Naive thymus-derived CD4-positive, alpha-beta T cell (primary cell): ENCODE measurements at regions of chr1 and their contacts with region 1.

Region 1: DNA sequence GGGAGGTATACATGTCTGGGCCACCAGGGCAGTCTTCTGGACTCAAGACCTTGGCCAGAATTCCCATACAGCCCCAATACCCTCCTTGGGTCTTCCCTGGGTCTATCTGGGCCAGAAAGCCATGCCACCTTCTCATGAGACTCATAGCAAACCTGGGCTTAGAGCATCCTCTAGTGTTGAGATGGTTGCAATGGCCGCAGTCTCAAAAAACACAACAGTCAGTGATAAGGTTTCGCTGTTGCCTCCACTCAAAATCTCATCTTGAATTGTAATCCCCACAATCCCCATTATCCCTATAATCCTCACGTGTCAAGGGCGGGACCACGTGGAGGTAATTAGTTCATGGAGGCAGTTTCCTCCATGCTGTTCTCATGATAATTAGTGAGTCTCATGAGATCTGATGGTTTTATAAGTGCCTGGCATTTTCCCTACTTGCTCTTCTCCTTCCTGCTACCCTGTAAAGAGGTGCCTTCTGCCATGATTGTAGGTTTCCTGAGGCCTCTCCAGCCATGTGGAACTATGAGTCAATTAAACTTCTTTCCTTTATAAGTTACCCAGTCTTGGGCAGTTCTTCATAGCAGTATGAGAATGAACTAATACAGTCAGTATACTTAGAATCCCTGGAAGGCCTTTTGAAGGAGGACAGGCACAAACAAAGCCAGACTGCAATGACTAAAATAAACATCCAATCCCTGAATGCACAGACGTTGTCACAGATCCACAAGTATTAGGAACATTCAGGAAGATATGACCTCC is 77.0 kb downstream of the CTH start:
- DNase-seq: peak in 5 of 9 donors; percentile 2 to 20 (median 7)
- ATAC-seq: peak; percentile 42
- H3K4me3 ChIP-seq: no peak overlapping the region
- H3K4me3 Mint-ChIP-seq: no peak overlapping the region
- H3K27ac ChIP-seq: no peak overlapping the region
- H3K27ac Mint-ChIP-seq: no peak overlapping the region
- H3K4me1 ChIP-seq: no peaks in the 10 kb centered on the region
- H3K4me1 Mint-ChIP-seq: peaks cover 0 to 3% (median 0%) of the 10 kb centered on the region in 7 donors
- H3K27me3 ChIP-seq: no peaks in the 10 kb centered on the region
- H3K27me3 Mint-ChIP-seq: peaks cover 0 to 16% (median 6%) of the 10 kb centered on the region in 5 donors

Region 2: GRCh38 chr1:70134148-70134547 is 353.9 kb before region 1 on chr1:
- CTCF ChIA-PET with region 1: no interaction called
- POLR2A ChIA-PET with region 1: no interaction called
- intact Hi-C with region 1: loop called (anchors 1 kb)
- DNase-seq: no peak
- ATAC-seq: no peak
- H3K4me3 ChIP-seq: no peak overlapping the region
- H3K4me3 Mint-ChIP-seq: no peak overlapping the region
- H3K27ac ChIP-seq: no peak overlapping the region
- H3K27ac Mint-ChIP-seq: no peak overlapping the region
- H3K4me1 ChIP-seq: no peaks in the 10 kb centered on the region
- H3K4me1 Mint-ChIP-seq: peaks cover 0 to 4% (median 0%) of the 10 kb centered on the region in 7 donors
- H3K27me3 ChIP-seq: no peaks in the 10 kb centered on the region
- H3K27me3 Mint-ChIP-seq: peaks cover 0 to 25% (median 9%) of the 10 kb centered on the region in 5 donors

Region 3: DNA sequence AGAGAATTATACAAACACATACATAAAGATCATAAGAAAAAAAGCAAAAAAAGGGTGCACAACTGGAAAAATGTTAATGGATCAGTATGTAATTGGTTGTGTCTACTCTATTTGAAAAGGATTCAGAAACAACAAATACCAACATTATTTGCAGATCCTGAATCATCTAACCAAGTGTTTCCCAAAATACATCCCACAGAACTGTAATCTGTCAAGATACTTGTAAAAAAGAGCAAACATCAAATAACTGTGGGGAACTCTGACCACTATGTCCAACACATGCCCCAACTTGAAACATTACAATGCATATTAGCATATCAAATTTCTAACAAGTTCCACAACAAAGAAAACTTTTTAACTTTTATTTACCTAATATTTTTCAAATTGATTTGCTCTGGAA is 156.1 kb before region 1 on chr1:
- CTCF ChIA-PET with region 1: no interaction called
- POLR2A ChIA-PET with region 1: no interaction called
- intact Hi-C with region 1: no loop called
- DNase-seq: no peak
- ATAC-seq: no peak
- H3K4me3 ChIP-seq: no peak overlapping the region
- H3K4me3 Mint-ChIP-seq: no peak overlapping the region
- H3K27ac ChIP-seq: no peak overlapping the region
- H3K27ac Mint-ChIP-seq: no peak overlapping the region
- H3K4me1 ChIP-seq: no peaks in the 10 kb centered on the region
- H3K4me1 Mint-ChIP-seq: peaks cover 14 to 50% (median 37%) of the 10 kb centered on the region in 7 donors
- H3K27me3 ChIP-seq: no peaks in the 10 kb centered on the region
- H3K27me3 Mint-ChIP-seq: no peaks in the 10 kb centered on the region